Naive thymus-derived CD4-positive, alpha-beta T cell (primary cell): ENCODE measurements at regions of chr1 and their contacts with region 1.

Region 1: DNA sequence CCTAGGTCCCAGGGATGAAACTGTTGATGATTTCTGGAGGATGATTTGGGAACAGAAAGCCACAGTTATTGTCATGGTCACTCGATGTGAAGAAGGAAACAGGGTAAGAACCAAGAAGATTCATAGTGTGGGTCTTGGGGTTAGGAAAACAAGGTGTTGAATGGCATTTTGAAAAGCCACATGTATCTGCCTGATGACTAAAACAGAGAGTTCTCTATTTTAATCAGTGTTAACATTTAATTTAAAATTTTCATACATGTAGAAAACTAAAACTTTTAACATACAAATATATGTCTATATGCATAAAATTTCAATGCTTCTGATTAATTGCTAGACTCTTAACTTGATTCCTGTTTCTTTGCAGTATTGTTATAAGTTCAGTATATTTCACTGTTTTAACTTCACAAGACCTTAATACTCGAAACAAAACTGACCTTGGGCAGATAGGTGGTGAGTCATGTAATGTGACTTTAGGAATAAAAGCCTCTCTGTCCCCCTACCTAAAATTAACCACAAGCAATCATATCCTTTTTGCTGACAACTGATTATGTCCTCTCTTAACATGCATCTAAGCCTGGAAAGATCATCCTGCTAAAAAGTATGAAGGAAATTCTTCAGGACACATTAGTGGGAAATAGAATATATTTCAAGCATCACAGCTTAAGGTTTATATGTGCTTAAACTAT is 95.6 kb downstream of the PTPRC start:
- DNase-seq: no peak
- ATAC-seq: no peak
- H3K4me3 ChIP-seq: no peak overlapping the region
- H3K4me3 Mint-ChIP-seq: peak overlapping the region in 5 of 10 donors; percentile 10 to 37 (median 32)
- H3K27ac ChIP-seq: no peak overlapping the region
- H3K27ac Mint-ChIP-seq: peak overlapping the region; percentile 0 to 79 (median 67)
- H3K4me1 ChIP-seq: peaks cover 9 to 14% of the 10 kb centered on the region in 2 donors
- H3K4me1 Mint-ChIP-seq: peaks cover 41 to 86% (median 82%) of the 10 kb centered on the region in 7 donors
- H3K27me3 ChIP-seq: no peaks in the 10 kb centered on the region
- H3K27me3 Mint-ChIP-seq: no peaks in the 10 kb centered on the region

Region 2: GRCh38 chr1:198720035-198720434 is 14.4 kb before region 1 on chr1:
- CTCF ChIA-PET with region 1: interaction called, 3 read pairs
- POLR2A ChIA-PET with region 1: no interaction called
- intact Hi-C with region 1: loop called in 1 of 2 experiments (anchors 2 kb)
- DNase-seq: no peak
- ATAC-seq: no peak
- H3K4me3 ChIP-seq: no peak overlapping the region
- H3K4me3 Mint-ChIP-seq: peak overlapping the region in 1 of 10 donors; percentile 24
- H3K27ac ChIP-seq: no peak overlapping the region
- H3K27ac Mint-ChIP-seq: peak overlapping the region in 3 of 9 donors; percentile 21 to 71 (median 40)
- H3K4me1 ChIP-seq: peaks cover 18 to 32% of the 10 kb centered on the region in 2 donors
- H3K4me1 Mint-ChIP-seq: peaks cover 33 to 74% (median 59%) of the 10 kb centered on the region in 7 donors
- H3K27me3 ChIP-seq: no peaks in the 10 kb centered on the region
- H3K27me3 Mint-ChIP-seq: no peaks in the 10 kb centered on the region

Region 3: DNA sequence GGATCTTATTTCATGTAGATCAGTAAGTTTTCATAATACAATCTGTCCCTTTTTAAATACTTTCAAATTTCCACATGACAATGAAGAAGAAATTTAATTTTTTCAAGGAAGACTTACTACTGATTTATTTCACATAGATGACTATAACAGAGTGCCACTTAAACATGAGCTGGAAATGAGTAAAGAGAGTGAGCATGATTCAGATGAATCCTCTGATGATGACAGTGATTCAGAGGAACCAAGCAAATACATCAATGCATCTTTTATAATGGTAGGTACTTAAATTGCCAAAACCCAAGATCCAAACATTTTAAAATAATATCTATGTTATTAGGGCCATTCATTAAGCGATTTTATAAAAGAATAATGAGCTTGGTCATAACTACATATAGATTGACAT is 14.8 kb after region 1 on chr1:
- CTCF ChIA-PET with region 1: no interaction called
- POLR2A ChIA-PET with region 1: interaction called, 3 read pairs
- intact Hi-C with region 1: loop called in 1 of 2 experiments (anchors 1 kb)
- DNase-seq: no peak
- ATAC-seq: no peak
- H3K4me3 ChIP-seq: no peak overlapping the region
- H3K4me3 Mint-ChIP-seq: no peak overlapping the region
- H3K27ac ChIP-seq: no peak overlapping the region
- H3K27ac Mint-ChIP-seq: peak overlapping the region in 3 of 9 donors; percentile 13 to 30 (median 14)
- H3K4me1 ChIP-seq: peaks cover 3 to 10% of the 10 kb centered on the region in 2 donors
- H3K4me1 Mint-ChIP-seq: peaks cover 6 to 24% (median 15%) of the 10 kb centered on the region in 7 donors
- H3K27me3 ChIP-seq: no peaks in the 10 kb centered on the region
- H3K27me3 Mint-ChIP-seq: no peaks in the 10 kb centered on the region